ENCODE measurements at regions of chrX and their contacts with region 1.

Region 1: DNA sequence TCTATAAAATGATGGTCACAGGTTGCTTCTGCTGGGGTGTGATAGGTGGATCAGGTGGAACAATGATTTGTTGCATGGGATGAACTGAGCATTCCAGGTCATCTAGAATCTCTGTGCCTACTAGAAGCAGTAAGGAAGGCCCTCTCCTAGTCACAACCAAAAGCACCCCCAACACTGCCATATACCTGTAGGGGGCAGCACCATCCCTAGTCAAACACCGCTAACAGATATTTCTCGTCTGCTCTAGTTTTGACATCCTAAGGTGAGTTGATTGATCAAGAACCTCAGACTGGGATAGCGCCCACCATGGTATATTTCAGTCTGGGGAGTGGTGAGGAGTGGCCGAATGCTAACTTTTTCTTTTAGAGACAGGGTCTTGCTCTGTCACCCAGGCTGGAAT is 160.2 kb downstream of the NHS start:
- DNase-seq: no peak
- ATAC-seq: no peak

Region 2: DNA sequence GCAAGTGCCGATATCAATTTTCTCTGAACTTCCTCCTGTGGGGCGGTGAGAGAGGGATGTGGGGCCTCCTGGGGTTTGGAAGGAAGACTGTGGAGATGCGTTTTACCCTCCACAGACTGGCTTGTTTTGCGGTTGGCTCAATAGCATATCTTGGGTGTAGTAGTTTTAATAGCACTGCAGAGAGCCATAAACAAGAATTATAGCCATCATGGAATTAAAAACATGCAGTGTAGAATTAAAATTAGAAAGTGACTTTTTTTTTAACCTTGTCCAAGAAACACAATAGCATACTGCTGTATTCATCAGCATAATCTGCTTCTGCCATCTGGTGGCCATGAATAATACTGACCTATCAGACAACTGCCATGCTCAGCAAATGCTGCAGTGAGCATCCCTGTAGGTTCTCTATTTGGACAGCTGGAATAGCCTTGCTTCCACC is 154.8 kb after region 1 on chrX:
- intact Hi-C with region 1: loop called (anchors 2 to 10 kb)
- DNase-seq: no peak
- ATAC-seq: peak; percentile 74 to 82